ENCODE measurements at regions of chr3 and their contacts with region 1.

Region 1: DNA sequence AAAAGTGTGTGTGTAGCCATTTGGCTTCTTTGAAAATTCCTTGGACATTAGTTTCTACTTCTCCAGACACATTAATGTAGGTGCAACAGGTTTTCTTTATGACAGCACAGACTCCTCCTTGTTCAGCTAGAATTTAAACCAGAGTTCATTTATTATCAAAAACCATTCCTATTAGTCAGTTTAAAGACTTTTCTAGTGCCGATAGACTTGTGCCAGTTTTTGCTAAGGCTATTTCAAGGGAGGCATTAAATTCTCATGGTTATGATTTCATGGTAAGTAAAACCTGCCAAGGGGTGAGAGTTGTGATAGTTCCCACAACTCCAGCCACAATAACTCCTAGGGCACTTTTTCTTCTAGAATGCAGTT is 20.6 kb upstream of the SENP7 start:
- DNase-seq: no peak
- ATAC-seq: no peak
- H3K4me3 ChIP-seq: no peak overlapping the region
- H3K4me3 Mint-ChIP-seq: no peak overlapping the region
- H3K27ac ChIP-seq: no peak overlapping the region
- H3K27ac Mint-ChIP-seq: no peak overlapping the region
- H3K4me1 ChIP-seq: peaks cover 18 to 31% of the 10 kb centered on the region in 2 experiments
- H3K4me1 Mint-ChIP-seq: peaks cover 36 to 43% (median 40%) of the 10 kb centered on the region in 3 donors
- H3K27me3 ChIP-seq: no peaks in the 10 kb centered on the region
- H3K27me3 Mint-ChIP-seq: no peaks in the 10 kb centered on the region

Region 2: GRCh38 chr3:101133652-101134051 is 399.9 kb before region 1 on chr3:
- CTCF ChIA-PET with region 1: no interaction called
- POLR2A ChIA-PET with region 1: no interaction called
- DNase-seq: peak in 1 of 35 experiments; percentile 2
- ATAC-seq: no peak
- H3K4me3 ChIP-seq: no peak overlapping the region
- H3K4me3 Mint-ChIP-seq: peak overlapping the region; percentile 19 to 52 (median 44)
- H3K27ac ChIP-seq: no peak overlapping the region
- H3K27ac Mint-ChIP-seq: peak overlapping the region; percentile 39 to 44
- H3K4me1 ChIP-seq: no peaks in the 10 kb centered on the region
- H3K4me1 Mint-ChIP-seq: peaks cover 13 to 18% (median 15%) of the 10 kb centered on the region in 3 donors
- H3K27me3 ChIP-seq: no peaks in the 10 kb centered on the region
- H3K27me3 Mint-ChIP-seq: no peaks in the 10 kb centered on the region

Region 3: GRCh38 chr3:101544161-101544850 is 10.7 kb after region 1 on chr3:
- CTCF ChIA-PET with region 1: interaction called in 1 of 2 experiments, 3 read pairs
- POLR2A ChIA-PET with region 1: interaction called, 7 to 10 read pairs
- DNase-seq: peak in 1 of 35 experiments; percentile 22
- ATAC-seq: peak in 1 of 4 experiments; percentile 55
- H3K4me3 ChIP-seq: no peak overlapping the region
- H3K4me3 Mint-ChIP-seq: peak overlapping the region in 1 of 3 donors; percentile 55
- H3K27ac ChIP-seq: peak overlapping the region; percentile 67
- H3K27ac Mint-ChIP-seq: peak overlapping the region; percentile 88 to 93
- H3K4me1 ChIP-seq: peaks cover 15 to 20% of the 10 kb centered on the region in 2 experiments
- H3K4me1 Mint-ChIP-seq: peaks cover 38 to 44% (median 43%) of the 10 kb centered on the region in 3 donors
- H3K27me3 ChIP-seq: no peaks in the 10 kb centered on the region
- H3K27me3 Mint-ChIP-seq: no peaks in the 10 kb centered on the region

Region 4: DNA sequence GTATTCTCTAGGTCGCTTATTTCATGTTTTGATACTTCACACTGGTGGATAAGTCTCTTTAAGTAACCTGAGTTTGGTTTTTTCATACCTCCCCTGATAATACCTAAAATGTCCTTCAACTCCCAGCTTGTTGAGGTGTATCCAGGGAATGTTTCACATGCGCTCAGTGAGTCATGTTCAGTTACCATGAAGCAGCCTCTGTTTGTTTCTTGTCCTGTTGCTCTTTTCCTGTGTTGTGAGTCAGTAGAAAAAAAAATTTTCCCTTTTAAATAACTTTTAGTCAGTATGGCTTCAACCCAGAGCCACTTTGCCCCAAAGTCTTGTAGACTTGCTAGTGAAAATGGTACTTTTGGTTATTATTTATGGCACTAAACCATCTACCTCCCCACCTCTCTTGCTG is 622.8 kb after region 1 on chr3:
- CTCF ChIA-PET with region 1: no interaction called
- POLR2A ChIA-PET with region 1: no interaction called
- DNase-seq: no peak
- ATAC-seq: no peak
- H3K4me3 ChIP-seq: no peak overlapping the region
- H3K4me3 Mint-ChIP-seq: no peak overlapping the region
- H3K27ac ChIP-seq: no peak overlapping the region
- H3K27ac Mint-ChIP-seq: no peak overlapping the region
- H3K4me1 ChIP-seq: no peaks in the 10 kb centered on the region
- H3K4me1 Mint-ChIP-seq: peaks cover 0 to 11% (median 0%) of the 10 kb centered on the region in 3 donors
- H3K27me3 ChIP-seq: no peaks in the 10 kb centered on the region
- H3K27me3 Mint-ChIP-seq: no peaks in the 10 kb centered on the region